ENCODE measurements at regions of chr7 and their contacts with region 1.

Region 1: DNA sequence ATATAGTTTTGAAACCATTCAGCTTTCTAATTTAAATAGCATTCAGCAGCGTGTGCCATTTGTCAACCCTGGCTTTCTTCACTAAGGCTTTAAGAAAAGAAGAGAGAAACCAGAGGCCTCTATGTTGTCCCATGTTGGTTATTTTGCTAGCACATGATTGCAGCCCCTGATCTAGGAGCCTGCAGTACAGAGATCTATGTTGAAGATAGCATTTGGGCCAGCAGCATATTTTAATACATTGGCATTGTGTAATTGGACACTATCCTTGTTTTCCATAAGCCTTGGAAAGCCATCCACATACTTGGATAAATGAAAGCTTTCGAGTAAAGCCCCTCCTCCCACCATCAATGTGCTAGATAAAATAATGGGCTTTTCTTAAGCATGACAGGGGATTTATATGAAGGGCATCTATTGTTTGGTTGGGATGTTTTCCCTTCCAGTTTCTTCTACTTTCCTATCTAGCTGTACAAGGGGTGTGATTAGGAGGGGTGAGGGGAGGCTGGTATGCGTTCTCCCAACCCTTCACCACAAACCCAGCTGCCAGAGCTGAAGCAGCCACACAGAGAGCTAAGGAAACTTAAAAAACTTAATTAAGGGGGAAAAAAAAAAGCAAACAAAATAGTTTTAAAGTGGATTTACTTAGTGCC is 23.1 kb upstream of the SDHAF3 start:
- DNase-seq: no peak
- ATAC-seq: no peak
- H3K4me3 ChIP-seq: no peak overlapping the region
- H3K27ac ChIP-seq: no peak overlapping the region
- H3K4me1 ChIP-seq: no peaks in the 10 kb centered on the region
- H3K27me3 ChIP-seq: peaks cover 0 to 13% (median 0%) of the 10 kb centered on the region in 4 donors
- CTCF ChIP-seq: no peak

Region 2: DNA sequence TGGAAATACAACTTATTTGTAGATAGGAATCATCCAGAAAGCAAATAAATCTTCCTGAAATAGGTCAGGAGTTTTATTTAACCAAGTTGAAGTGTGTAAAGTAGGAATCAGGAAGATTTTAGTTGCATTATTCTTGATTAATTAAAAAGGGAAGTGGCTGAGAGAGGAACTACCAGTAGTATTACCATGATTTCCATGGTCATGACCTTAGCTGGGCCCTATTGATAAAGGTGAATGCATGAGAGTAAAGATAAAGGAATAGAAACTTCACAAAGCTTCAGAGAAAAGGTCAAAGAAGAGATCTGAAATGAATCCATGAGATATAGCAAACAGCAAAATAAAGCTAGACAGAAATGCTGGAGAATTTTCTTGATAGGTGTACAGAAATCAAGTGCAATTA is 135.3 kb before region 1 on chr7:
- intact Hi-C with region 1: loop called in 1 of 3 experiments (anchors 5 kb)
- DNase-seq: no peak
- ATAC-seq: no peak
- H3K4me3 ChIP-seq: no peak overlapping the region
- H3K27ac ChIP-seq: no peak overlapping the region
- H3K4me1 ChIP-seq: no peaks in the 10 kb centered on the region
- H3K27me3 ChIP-seq: no peaks in the 10 kb centered on the region
- CTCF ChIP-seq: no peak

Region 3: GRCh38 chr7:97149843-97150242 is 55.4 kb after region 1 on chr7:
- intact Hi-C with region 1: loop called in 1 of 3 experiments (anchors 10 kb)
- DNase-seq: no peak
- ATAC-seq: no peak
- H3K4me3 ChIP-seq: no peak overlapping the region
- H3K27ac ChIP-seq: no peak overlapping the region
- H3K4me1 ChIP-seq: no peaks in the 10 kb centered on the region
- H3K27me3 ChIP-seq: no peaks in the 10 kb centered on the region
- CTCF ChIP-seq: no peak

Region 4: GRCh38 chr7:97226541-97226940 is 132.1 kb after region 1 on chr7:
- intact Hi-C with region 1: no loop called
- DNase-seq: no peak
- ATAC-seq: no peak
- H3K4me3 ChIP-seq: no peak overlapping the region
- H3K27ac ChIP-seq: no peak overlapping the region
- H3K4me1 ChIP-seq: no peaks in the 10 kb centered on the region
- H3K27me3 ChIP-seq: no peaks in the 10 kb centered on the region
- CTCF ChIP-seq: no peak

Measured in pancreas (tissue), 10 donors.